Cardiac septum (tissue), 1 donor: ENCODE measurements at regions of chr1 and their contacts with region 1.

Region 1: GRCh38 chr1:44609412-44609767 is 64.9 kb downstream of the TMEM53 start:
- DNase-seq: no peak

Region 2: DNA sequence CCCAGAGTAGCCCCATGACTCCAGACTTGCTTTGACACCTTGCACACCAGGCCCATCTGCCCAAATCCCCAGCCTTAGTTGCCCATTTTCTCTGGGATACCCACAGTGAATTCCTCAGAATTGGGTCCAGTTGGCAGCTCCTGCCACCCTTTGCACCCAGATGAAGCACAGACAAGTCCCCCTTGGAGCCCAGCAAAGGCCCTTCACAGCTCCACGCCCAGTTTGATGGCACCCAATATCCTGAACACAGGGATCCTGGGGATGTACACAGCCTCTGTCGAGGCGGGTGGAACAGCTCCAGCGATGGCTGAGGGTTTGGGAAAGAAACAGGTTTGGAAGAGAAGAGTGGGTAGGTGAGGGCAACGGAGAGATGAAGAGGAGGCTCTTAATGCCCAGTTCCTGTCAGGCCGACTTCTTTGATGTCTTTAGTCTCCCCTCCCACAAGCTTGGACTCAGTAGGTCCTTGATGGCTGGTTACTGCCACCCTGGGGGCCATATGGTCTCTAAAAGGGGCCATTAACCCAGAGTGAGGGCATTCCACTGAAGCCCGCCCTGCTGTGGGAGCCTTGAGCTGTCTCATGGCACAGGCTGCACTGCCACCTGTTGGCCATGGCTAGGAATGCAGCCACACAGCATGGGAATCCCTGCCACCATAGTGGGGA is 43.2 kb after region 1 on chr1:
- intact Hi-C with region 1: loop called (anchors 1 kb)
- DNase-seq: peak; percentile 89